PC-3 (cell line): ENCODE measurements at regions of chr3 and their contacts with region 1.

Region 1: GRCh38 chr3:141998669-141999290 is 122.3 kb downstream of the ATP1B3 start:
- DNase-seq: peak; percentile 23
- ATAC-seq: no peak
- H3K4me3 ChIP-seq: no peak overlapping the region
- H3K27ac ChIP-seq: no peak overlapping the region
- H3K4me1 ChIP-seq: no peaks in the 10 kb centered on the region
- H3K27me3 ChIP-seq: no peaks in the 10 kb centered on the region
- CTCF ChIP-seq: peak; percentile 58

Region 2: DNA sequence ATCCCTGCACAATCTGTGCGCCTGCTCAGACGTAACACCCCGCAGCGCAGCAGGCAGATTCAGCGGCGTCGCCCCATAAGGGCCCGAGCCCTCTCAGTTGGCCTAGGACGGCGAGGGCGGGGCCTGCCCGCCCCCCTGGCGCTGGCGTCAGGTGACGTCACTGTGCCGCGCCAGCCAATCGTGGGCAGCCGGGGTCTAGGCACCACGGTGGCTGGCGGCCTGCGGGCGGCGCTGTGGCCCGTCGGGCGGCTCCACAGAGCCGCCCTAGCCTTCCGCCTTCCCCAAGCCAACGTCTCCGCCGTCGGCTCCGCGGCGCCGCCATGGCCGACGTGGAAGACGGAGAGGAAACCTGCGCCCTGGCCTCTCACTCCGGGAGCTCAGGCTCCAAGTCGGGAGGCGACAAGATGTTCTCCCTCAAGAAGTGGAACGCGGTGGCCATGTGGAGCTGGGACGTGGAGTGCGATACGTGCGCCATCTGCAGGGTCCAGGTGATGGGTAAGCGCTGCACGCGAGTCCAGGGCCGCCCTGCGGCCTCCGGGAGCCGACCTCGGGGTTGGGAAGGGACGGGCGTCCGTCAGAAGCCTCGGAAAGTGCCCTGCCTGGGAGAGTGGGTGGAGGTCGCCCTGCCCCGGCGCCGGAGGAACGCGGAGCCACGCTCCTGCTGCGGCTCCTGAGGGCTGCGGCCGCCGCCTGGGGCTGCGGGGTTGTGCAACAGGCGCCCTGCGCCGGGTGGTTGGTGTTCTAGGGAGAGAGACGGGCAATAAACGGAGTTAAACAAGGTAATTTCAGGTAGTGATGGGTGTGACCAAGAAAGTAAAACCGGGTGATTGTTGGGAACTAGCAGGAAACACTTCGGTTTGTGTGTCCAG is 260.5 kb before region 1 on chr3 and contains the start of gene RNF7:
- CTCF ChIA-PET with region 1: no interaction called
- POLR2A ChIA-PET with region 1: no interaction called
- intact Hi-C with region 1: loop called (anchors 2 kb)
- DNase-seq: peak; percentile 95
- ATAC-seq: peak; percentile 95
- H3K4me3 ChIP-seq: peak within 1 kb of the TSS; percentile 95
- H3K27ac ChIP-seq: peak within 1 kb of the TSS; percentile 74
- H3K4me1 ChIP-seq: peaks cover 19% of the 10 kb centered on the region
- H3K27me3 ChIP-seq: no peaks in the 10 kb centered on the region
- CTCF ChIP-seq: peak; percentile 71
- total RNA-seq, gene RNF7: 42.3 and 42.9 TPM in 2 replicates

Region 3: GRCh38 chr3:141940204-141940776 is 58.5 kb before region 1 on chr3:
- CTCF ChIA-PET with region 1: no interaction called
- POLR2A ChIA-PET with region 1: no interaction called
- intact Hi-C with region 1: loop called (anchors 10 kb)
- DNase-seq: peak; percentile 93
- ATAC-seq: peak; percentile 92
- H3K4me3 ChIP-seq: peak overlapping the region; percentile 24; the same call in 1 of the 2 replicates
- H3K27ac ChIP-seq: peak overlapping the region; percentile 60
- H3K4me1 ChIP-seq: peaks cover 22% of the 10 kb centered on the region
- H3K27me3 ChIP-seq: no peaks in the 10 kb centered on the region
- CTCF ChIP-seq: no peak

Region 4: DNA sequence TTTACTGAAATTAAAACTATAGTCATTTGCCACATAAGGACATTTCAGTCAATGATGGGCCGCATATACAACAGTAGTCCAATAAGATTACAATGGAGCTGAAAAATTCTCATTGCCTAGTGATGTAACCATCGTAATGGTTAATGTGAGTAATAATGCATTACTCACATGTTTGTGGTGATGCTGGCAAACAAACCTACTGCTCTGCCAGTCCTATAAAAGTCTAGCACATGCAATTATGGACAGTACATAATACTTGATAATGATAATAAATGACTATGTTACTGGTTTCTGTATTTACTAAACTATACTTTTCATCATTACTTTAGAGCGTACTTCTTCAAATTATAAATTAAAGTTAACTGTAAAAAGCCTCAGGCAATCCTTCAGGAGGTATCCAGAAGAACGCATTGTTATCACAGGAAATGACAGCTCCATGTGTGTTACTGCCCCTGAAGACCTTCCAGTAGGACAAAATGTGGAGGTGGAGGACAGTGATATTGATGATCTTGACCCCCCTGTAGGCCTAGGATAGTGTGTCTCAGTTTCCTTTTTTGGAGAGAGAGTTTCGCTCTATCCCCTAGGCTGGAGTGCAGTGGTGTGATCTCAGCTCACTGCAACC is 19.6 kb before region 1 on chr3:
- CTCF ChIA-PET with region 1: no interaction called
- POLR2A ChIA-PET with region 1: interaction called, 4 read pairs
- intact Hi-C with region 1: loop called (anchors 1 kb)
- DNase-seq: peak; percentile 86
- ATAC-seq: peak; percentile 84
- H3K4me3 ChIP-seq: no peak overlapping the region
- H3K27ac ChIP-seq: peak overlapping the region; percentile 32
- H3K4me1 ChIP-seq: peaks cover 21% of the 10 kb centered on the region
- H3K27me3 ChIP-seq: no peaks in the 10 kb centered on the region
- CTCF ChIP-seq: no peak